ENCODE measurements at regions of chr3 and their contacts with region 1.

Region 1: DNA sequence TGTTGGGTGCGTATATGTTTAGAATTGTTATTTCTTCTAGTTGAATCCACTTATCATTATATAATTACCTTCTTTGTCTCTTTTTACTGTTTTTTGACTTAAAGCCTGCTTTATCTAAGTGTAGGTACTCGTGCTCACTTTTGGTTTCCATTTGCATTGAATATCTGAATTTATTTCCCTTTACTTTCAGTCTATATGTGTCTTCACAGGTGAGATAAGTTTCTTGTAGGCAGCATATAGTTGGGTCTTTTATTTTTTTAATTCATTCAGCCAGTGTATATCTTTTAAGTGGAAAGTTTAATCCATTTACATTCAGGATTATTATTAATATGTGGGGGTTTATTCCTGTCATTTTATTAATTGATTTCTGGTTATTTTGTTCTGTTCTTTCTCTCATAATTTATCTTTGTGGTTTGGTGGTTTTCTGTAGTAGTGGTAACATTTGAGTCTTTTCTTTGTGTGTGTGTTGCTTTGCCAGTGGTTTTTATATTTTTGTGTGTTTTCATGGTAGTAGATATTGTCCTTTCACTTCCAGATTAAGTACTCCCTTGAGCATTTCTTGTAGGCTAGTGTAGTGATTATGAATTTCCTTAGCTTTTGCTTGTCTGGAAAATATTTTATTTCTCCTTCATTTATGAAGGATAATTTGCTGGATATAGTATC is 27.3 kb downstream of the STT3B start:
- DNase-seq: no peak
- H3K4me3 Mint-ChIP-seq: peak overlapping the region; percentile 29
- H3K27ac Mint-ChIP-seq: peak overlapping the region; percentile 64
- H3K4me1 Mint-ChIP-seq: peaks cover 85% of the 10 kb centered on the region
- H3K27me3 Mint-ChIP-seq: no peaks in the 10 kb centered on the region

Region 2: GRCh38 chr3:31307131-31307785 is 252.7 kb before region 1 on chr3:
- CTCF ChIA-PET with region 1: no interaction called
- POLR2A ChIA-PET with region 1: no interaction called
- intact Hi-C with region 1: no loop called
- DNase-seq: no peak
- H3K4me3 Mint-ChIP-seq: no peak overlapping the region
- H3K27ac Mint-ChIP-seq: no peak overlapping the region
- H3K4me1 Mint-ChIP-seq: peaks cover 4% of the 10 kb centered on the region
- H3K27me3 Mint-ChIP-seq: no peaks in the 10 kb centered on the region

Region 3: DNA sequence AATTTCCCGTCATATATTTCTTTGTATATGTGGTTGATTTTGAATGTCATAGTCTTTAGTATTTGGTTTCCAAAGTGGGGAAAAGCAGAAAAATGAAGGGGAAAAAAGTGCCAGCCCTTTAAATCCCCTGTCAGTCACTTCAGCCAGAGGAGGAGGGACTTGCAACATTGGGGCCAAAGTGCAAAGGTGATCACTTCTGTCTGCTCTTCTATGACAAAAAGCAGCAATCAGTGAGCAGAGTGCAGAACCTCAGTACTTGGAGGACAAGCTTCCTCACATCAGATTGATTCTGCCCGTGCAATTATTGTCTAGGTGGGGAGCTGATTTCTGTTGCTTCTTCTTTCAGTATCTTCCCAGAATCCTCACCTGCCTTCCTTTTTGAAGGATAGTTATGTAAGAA is 32.8 kb after region 1 on chr3:
- CTCF ChIA-PET with region 1: no interaction called
- POLR2A ChIA-PET with region 1: no interaction called
- intact Hi-C with region 1: loop called (anchors 5 kb)
- DNase-seq: no peak
- H3K4me3 Mint-ChIP-seq: no peak overlapping the region
- H3K27ac Mint-ChIP-seq: peak overlapping the region; percentile 63
- H3K4me1 Mint-ChIP-seq: peaks cover 57% of the 10 kb centered on the region
- H3K27me3 Mint-ChIP-seq: no peaks in the 10 kb centered on the region

Region 4: GRCh38 chr3:31634481-31634880 is 74.5 kb after region 1 on chr3:
- CTCF ChIA-PET with region 1: no interaction called
- POLR2A ChIA-PET with region 1: no interaction called
- intact Hi-C with region 1: loop called (anchors 5 kb)
- DNase-seq: no peak
- H3K4me3 Mint-ChIP-seq: no peak overlapping the region
- H3K27ac Mint-ChIP-seq: no peak overlapping the region
- H3K4me1 Mint-ChIP-seq: peaks cover 48% of the 10 kb centered on the region
- H3K27me3 Mint-ChIP-seq: no peaks in the 10 kb centered on the region